A673 (cell line): ENCODE measurements at regions of chr11 and their contacts with region 1.

Region 1: DNA sequence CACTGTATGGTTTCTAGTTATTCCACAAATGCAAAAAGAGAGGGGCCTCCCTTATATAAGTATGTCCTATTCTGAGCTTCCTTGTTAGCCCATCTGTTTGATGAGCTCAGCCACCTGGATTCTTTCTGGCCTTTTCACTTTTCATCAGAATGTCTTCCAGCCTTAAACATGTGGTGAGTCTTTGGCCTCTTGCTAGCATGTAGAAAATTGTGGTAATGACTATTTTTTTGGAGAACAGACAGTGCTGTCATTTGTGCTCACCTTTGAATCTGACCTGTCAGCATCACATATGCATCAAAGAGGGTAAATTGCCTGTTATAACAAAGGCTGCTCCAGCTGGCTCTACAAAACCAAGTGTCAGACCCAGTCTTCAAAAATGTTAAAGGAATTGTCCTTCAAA is 558.7 kb downstream of the RAB38 start:
- DNase-seq: no peak
- H3K4me3 ChIP-seq: no peak overlapping the region
- H3K27ac ChIP-seq: no peak overlapping the region
- H3K4me1 ChIP-seq: no peaks in the 10 kb centered on the region
- H3K27me3 ChIP-seq: peaks cover 42% of the 10 kb centered on the region
- CTCF ChIP-seq: no peak

Region 2: DNA sequence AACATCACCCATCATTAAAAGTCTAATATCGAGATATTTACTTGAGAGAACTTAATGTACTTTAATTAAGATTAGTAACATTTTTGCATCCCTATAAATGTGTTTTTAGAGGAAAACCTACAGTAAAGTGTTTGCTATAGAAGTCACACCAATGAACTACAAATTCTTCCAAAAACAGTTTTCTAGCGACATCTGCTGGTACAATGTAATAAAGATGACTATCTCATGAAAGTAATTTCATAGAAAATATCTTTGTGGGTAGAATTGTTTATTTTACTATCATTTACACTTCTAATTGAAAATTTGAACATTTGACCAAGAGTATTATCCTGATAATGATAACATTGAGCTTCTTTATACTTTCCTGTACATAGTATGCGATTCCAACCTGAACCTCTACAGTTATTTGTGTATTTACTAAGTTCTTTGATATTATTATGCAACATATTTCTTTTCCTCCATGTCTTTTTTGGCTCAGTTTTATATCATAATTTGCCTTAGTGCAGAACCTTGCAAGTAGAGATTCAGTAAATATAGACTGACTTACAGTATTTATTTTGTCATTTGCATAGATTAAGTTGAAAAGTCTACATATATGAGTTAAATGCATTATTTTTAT is 326.1 kb before region 1 on chr11:
- CTCF ChIA-PET with region 1: no interaction called
- POLR2A ChIA-PET with region 1: no interaction called
- intact Hi-C with region 1: no loop called
- DNase-seq: peak; percentile 91
- H3K4me3 ChIP-seq: no peak overlapping the region
- H3K27ac ChIP-seq: peak overlapping the region; percentile 30
- H3K4me1 ChIP-seq: peaks cover 28% of the 10 kb centered on the region
- H3K27me3 ChIP-seq: no peaks in the 10 kb centered on the region
- CTCF ChIP-seq: peak; percentile 80

Region 3: DNA sequence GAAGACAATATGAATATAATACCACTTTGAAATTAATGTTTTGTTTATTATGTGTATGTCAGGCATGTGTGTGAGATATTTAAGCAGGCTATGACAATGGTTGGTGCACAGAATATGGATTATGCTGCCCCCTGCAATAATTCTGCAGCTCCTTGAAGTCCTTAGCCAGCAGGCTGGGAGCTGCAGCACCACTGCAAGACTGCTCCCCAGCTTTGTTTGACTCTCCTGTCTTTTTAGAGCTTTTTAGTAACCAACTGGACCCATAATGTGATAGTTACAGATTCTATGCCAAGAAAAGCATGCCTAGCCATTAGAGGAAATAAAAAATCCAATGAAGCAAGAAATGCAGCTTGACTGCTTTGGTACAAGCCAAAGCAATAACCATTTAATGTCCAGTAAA is 43.6 kb before region 1 on chr11:
- CTCF ChIA-PET with region 1: no interaction called
- POLR2A ChIA-PET with region 1: no interaction called
- intact Hi-C with region 1: no loop called
- DNase-seq: no peak
- H3K4me3 ChIP-seq: no peak overlapping the region
- H3K27ac ChIP-seq: no peak overlapping the region
- H3K4me1 ChIP-seq: no peaks in the 10 kb centered on the region
- H3K27me3 ChIP-seq: peaks cover 4% of the 10 kb centered on the region
- CTCF ChIP-seq: 0 out of 2 replicates have a peak, but pooled peaks have one; percentile 11

Region 4: DNA sequence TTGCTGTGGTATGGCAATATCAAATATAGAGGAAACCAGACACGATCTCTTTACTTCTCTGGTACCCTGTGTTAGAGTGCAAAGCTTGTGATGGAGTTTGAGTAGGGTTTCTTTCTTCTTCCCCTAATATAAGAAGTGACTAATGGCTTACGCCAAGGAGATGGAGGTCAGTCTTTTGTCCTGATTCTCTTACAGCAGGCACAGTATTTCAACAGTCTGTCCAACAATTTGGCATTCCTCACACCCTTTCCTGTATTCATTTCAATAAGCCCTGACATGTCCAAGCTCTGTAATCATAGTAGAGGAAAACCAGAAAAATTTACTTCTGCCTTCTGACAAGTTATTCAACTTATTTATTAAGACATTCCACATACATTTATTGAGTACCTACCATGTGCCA is 32.6 kb before region 1 on chr11:
- CTCF ChIA-PET with region 1: interaction called, 10 read pairs
- POLR2A ChIA-PET with region 1: no interaction called
- intact Hi-C with region 1: no loop called
- DNase-seq: no peak
- H3K4me3 ChIP-seq: no peak overlapping the region
- H3K27ac ChIP-seq: no peak overlapping the region
- H3K4me1 ChIP-seq: no peaks in the 10 kb centered on the region
- H3K27me3 ChIP-seq: peaks cover 20% of the 10 kb centered on the region
- CTCF ChIP-seq: no peak

Region 5: DNA sequence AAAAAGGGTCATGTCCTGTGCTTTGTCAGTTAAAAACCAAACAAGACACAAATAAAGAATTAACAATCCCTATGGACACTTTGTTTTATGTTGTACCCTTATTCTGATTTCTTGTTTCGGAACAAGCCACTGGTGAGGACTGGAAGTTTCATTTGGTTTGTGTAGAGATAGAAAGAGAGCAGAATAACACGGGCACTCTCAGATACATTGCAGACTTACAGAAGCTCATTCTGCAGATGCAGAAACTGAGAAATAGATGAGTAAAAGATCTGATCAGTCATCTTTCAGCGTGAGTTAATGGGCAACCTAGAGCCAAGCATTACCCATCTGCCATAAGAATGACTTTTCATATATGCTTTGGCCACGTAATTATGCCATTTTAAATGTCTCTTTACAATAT is 151.1 kb after region 1 on chr11:
- CTCF ChIA-PET with region 1: no interaction called
- POLR2A ChIA-PET with region 1: no interaction called
- intact Hi-C with region 1: no loop called
- DNase-seq: no peak
- H3K4me3 ChIP-seq: no peak overlapping the region
- H3K27ac ChIP-seq: no peak overlapping the region
- H3K4me1 ChIP-seq: no peaks in the 10 kb centered on the region
- H3K27me3 ChIP-seq: peaks cover 47% of the 10 kb centered on the region
- CTCF ChIP-seq: no peak

Region 6: GRCh38 chr11:87901341-87901740 is 284.8 kb after region 1 on chr11:
- CTCF ChIA-PET with region 1: no interaction called
- POLR2A ChIA-PET with region 1: no interaction called
- intact Hi-C with region 1: no loop called
- DNase-seq: no peak
- H3K4me3 ChIP-seq: no peak overlapping the region
- H3K27ac ChIP-seq: no peak overlapping the region
- H3K4me1 ChIP-seq: no peaks in the 10 kb centered on the region
- H3K27me3 ChIP-seq: peaks cover 75% of the 10 kb centered on the region
- CTCF ChIP-seq: no peak